T-cell (primary cell): ENCODE measurements at regions of chr6 and their contacts with region 1.

Region 1: GRCh38 chr6:106872016-106872421 is 102.5 kb downstream of the CD24 start:
- DNase-seq: no peak
- ATAC-seq: no peak
- H3K4me3 ChIP-seq: no peak overlapping the region
- H3K4me3 Mint-ChIP-seq: no peak overlapping the region
- H3K27ac ChIP-seq: no peak overlapping the region
- H3K27ac Mint-ChIP-seq: no peak overlapping the region
- H3K4me1 ChIP-seq: no peaks in the 10 kb centered on the region
- H3K4me1 Mint-ChIP-seq: no peaks in the 10 kb centered on the region
- H3K27me3 ChIP-seq: peaks cover 0 to 5% of the 10 kb centered on the region in 2 experiments
- H3K27me3 Mint-ChIP-seq: peaks cover 2 to 3% of the 10 kb centered on the region in 2 donors

Region 2: GRCh38 chr6:106556368-106556960 is 315.6 kb before region 1 on chr6:
- CTCF ChIA-PET with region 1: no interaction called
- POLR2A ChIA-PET with region 1: no interaction called
- DNase-seq: peak in 1 of 35 experiments; percentile 62
- ATAC-seq: peak; percentile 45 to 73 (median 52)
- H3K4me3 ChIP-seq: no peak overlapping the region
- H3K4me3 Mint-ChIP-seq: no peak overlapping the region
- H3K27ac ChIP-seq: no peak overlapping the region
- H3K27ac Mint-ChIP-seq: peak overlapping the region; percentile 43 to 50
- H3K4me1 ChIP-seq: no peaks in the 10 kb centered on the region
- H3K4me1 Mint-ChIP-seq: peaks cover 9 to 19% (median 14%) of the 10 kb centered on the region in 3 donors
- H3K27me3 ChIP-seq: no peaks in the 10 kb centered on the region
- H3K27me3 Mint-ChIP-seq: no peaks in the 10 kb centered on the region

Region 3: DNA sequence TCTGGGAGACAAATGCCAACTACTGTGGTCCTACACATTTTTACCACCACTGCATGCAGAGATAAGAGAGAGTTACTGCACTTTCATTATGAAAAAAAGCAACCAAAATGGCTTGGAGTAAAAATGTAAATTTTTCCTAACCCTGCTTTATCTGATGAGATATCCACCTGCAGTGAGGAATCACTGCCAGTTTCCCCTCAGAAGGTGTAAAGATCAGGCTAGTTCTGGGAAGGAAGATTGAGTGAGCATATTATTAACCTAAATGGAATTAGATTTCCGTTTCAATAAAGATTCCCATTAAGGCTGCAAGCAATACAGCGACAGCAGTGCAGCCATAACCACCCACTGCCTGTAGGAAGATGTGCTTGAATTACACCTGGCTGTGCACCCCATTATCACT is 157.7 kb before region 1 on chr6:
- CTCF ChIA-PET with region 1: no interaction called
- POLR2A ChIA-PET with region 1: interaction called in 1 of 2 experiments, 10 read pairs
- DNase-seq: no peak
- ATAC-seq: no peak
- H3K4me3 ChIP-seq: no peak overlapping the region
- H3K4me3 Mint-ChIP-seq: no peak overlapping the region
- H3K27ac ChIP-seq: no peak overlapping the region
- H3K27ac Mint-ChIP-seq: no peak overlapping the region
- H3K4me1 ChIP-seq: no peaks in the 10 kb centered on the region
- H3K4me1 Mint-ChIP-seq: no peaks in the 10 kb centered on the region
- H3K27me3 ChIP-seq: peaks cover 0 to 5% of the 10 kb centered on the region in 2 experiments
- H3K27me3 Mint-ChIP-seq: peaks cover 26 to 27% of the 10 kb centered on the region in 2 donors

Region 4: DNA sequence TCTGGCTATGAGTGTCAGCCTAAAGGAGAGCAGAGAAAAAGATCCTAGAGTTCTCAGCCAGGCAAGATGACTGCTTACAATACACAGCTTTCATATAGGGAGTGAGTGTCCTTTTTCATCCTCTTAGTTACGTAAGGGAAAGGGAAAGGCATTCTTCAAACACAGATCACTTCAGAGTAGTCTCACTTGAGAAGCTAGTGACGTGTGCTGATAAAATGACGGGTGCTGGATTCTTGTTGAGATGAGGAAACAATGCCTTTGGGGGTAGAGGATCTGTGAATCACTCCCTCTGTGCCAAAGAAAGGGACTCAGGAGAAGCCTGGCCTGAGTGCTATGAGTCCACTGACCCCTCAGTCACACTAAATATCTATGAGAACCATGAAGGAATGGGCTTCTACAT is 125.4 kb before region 1 on chr6:
- CTCF ChIA-PET with region 1: no interaction called
- POLR2A ChIA-PET with region 1: no interaction called
- DNase-seq: no peak
- ATAC-seq: no peak
- H3K4me3 ChIP-seq: no peak overlapping the region
- H3K4me3 Mint-ChIP-seq: no peak overlapping the region
- H3K27ac ChIP-seq: no peak overlapping the region
- H3K27ac Mint-ChIP-seq: no peak overlapping the region
- H3K4me1 ChIP-seq: no peaks in the 10 kb centered on the region
- H3K4me1 Mint-ChIP-seq: no peaks in the 10 kb centered on the region
- H3K27me3 ChIP-seq: peaks cover 0 to 4% of the 10 kb centered on the region in 2 experiments
- H3K27me3 Mint-ChIP-seq: peaks cover 11 to 20% of the 10 kb centered on the region in 2 donors